Natural killer cell (primary cell): ENCODE measurements at regions of chr12 and their contacts with region 1.

Region 1: GRCh38 chr12:22631863-22632463 is 7.0 kb downstream of the ETNK1 start:
- DNase-seq: peak in 1 of 2 donors; percentile 55
- ATAC-seq: peak in 2 of 3 donors; percentile 58 to 66
- H3K4me3 ChIP-seq: no peak overlapping the region
- H3K4me3 Mint-ChIP-seq: no peak overlapping the region
- H3K27ac ChIP-seq: no peak overlapping the region
- H3K27ac Mint-ChIP-seq: peak overlapping the region; percentile 13 to 70
- H3K4me1 ChIP-seq: peaks cover 4% of the 10 kb centered on the region
- H3K4me1 Mint-ChIP-seq: peaks cover 55 to 59% of the 10 kb centered on the region in 2 donors
- H3K27me3 ChIP-seq: no peaks in the 10 kb centered on the region
- H3K27me3 Mint-ChIP-seq: no peaks in the 10 kb centered on the region
- CTCF ChIP-seq: peak; percentile 78

Region 2: GRCh38 chr12:22529281-22530060 is 102.5 kb before region 1 on chr12:
- intact Hi-C with region 1: loop called (anchors 5 kb)
- DNase-seq: peak in 1 of 2 donors; percentile 66
- ATAC-seq: peak; percentile 74 to 78 (median 78)
- H3K4me3 ChIP-seq: no peak overlapping the region
- H3K4me3 Mint-ChIP-seq: no peak overlapping the region
- H3K27ac ChIP-seq: no peak overlapping the region
- H3K27ac Mint-ChIP-seq: no peak overlapping the region
- H3K4me1 ChIP-seq: no peaks in the 10 kb centered on the region
- H3K4me1 Mint-ChIP-seq: peaks cover 12 to 15% of the 10 kb centered on the region in 2 donors
- H3K27me3 ChIP-seq: no peaks in the 10 kb centered on the region
- H3K27me3 Mint-ChIP-seq: no peaks in the 10 kb centered on the region
- CTCF ChIP-seq: peak; percentile 57